Activated B cell treated with CpG ODN at 0.5 μM for 24 hours (primary cell): ENCODE measurements at regions of chr9 and their contacts with region 1.

Region 1: GRCh38 chr9:1869843-1870242 is 145.3 kb upstream of the SMARCA2 start:
- DNase-seq: no peak
- ATAC-seq: peak; percentile 94
- H3K4me3 Mint-ChIP-seq: no peak overlapping the region
- H3K27ac Mint-ChIP-seq: peak overlapping the region; percentile 15
- H3K4me1 Mint-ChIP-seq: peaks cover 9% of the 10 kb centered on the region
- H3K27me3 Mint-ChIP-seq: no peaks in the 10 kb centered on the region
- CTCF ChIP-seq: no peak

Region 2: GRCh38 chr9:677461-678097 is 1192.3 kb before region 1 on chr9:
- CTCF ChIA-PET with region 1: no interaction called
- POLR2A ChIA-PET with region 1: no interaction called
- intact Hi-C with region 1: no loop called
- DNase-seq: no peak
- ATAC-seq: no peak
- H3K4me3 Mint-ChIP-seq: peak overlapping the region; percentile 74
- H3K27ac Mint-ChIP-seq: no peak overlapping the region
- H3K4me1 Mint-ChIP-seq: peaks cover 10% of the 10 kb centered on the region
- H3K27me3 Mint-ChIP-seq: no peaks in the 10 kb centered on the region
- CTCF ChIP-seq: no peak

Region 3: DNA sequence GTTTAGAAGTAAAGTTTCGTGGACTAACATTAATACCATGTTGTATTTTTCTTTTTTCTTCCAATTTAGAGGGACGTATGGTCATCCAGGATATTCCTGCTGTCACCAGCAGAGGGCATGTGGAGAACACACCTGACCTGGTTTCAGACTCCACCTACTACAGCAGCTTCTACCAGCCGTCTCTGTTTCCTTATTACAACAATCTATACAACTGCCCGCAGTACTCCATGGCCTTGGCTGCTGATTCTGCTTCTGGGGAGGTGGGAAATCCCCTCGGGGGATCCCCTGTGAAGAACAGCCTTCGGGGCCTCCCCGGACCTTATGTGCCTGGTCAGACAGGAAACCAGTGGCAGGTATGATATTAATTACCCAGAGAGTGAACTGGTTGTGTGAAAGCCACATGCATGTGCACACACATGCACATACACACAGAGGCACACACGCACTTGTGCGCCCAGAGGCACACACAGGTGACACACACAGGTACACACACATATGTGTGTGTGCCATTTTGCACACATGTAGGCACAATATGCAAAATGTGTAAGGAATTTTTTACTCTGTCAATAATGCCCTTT is 975.9 kb before region 1 on chr9:
- CTCF ChIA-PET with region 1: no interaction called
- POLR2A ChIA-PET with region 1: no interaction called
- intact Hi-C with region 1: loop called (anchors 5 kb)
- DNase-seq: peak; percentile 38
- ATAC-seq: peak; percentile 98
- H3K4me3 Mint-ChIP-seq: no peak overlapping the region
- H3K27ac Mint-ChIP-seq: peak overlapping the region; percentile 47
- H3K4me1 Mint-ChIP-seq: peaks cover 13% of the 10 kb centered on the region
- H3K27me3 Mint-ChIP-seq: peaks cover 18% of the 10 kb centered on the region
- CTCF ChIP-seq: no peak

Region 4: GRCh38 chr9:1454616-1455347 is 415.1 kb before region 1 on chr9:
- CTCF ChIA-PET with region 1: no interaction called
- POLR2A ChIA-PET with region 1: no interaction called
- intact Hi-C with region 1: no loop called
- DNase-seq: no peak
- ATAC-seq: no peak
- H3K4me3 Mint-ChIP-seq: no peak overlapping the region
- H3K27ac Mint-ChIP-seq: no peak overlapping the region
- H3K4me1 Mint-ChIP-seq: no peaks in the 10 kb centered on the region
- H3K27me3 Mint-ChIP-seq: peaks cover 4% of the 10 kb centered on the region
- CTCF ChIP-seq: no peak

Region 5: DNA sequence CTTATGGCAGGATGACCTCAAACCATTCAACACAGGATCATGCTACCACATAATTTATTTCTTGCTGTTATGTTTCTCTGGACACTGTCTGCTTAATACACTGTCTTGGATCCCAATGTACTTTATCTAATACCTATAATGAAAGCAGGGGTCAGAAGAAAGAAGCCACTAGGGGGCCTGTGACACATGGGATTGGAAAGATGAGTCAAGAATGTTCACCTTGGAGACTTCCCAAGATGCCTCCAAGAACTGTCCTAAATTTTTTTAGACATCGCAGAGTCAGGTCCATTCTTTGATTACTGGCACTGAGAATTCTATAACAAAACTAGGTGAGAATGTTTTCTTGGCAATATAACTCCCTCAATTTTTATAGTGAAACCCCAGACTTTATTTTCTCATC is 160.5 kb before region 1 on chr9:
- CTCF ChIA-PET with region 1: interaction called, 5 read pairs
- POLR2A ChIA-PET with region 1: no interaction called
- intact Hi-C with region 1: loop called (anchors 1 kb)
- DNase-seq: no peak
- ATAC-seq: no peak
- H3K4me3 Mint-ChIP-seq: no peak overlapping the region
- H3K27ac Mint-ChIP-seq: no peak overlapping the region
- H3K4me1 Mint-ChIP-seq: no peaks in the 10 kb centered on the region
- H3K27me3 Mint-ChIP-seq: peaks cover 4% of the 10 kb centered on the region
- CTCF ChIP-seq: no peak

Region 6: DNA sequence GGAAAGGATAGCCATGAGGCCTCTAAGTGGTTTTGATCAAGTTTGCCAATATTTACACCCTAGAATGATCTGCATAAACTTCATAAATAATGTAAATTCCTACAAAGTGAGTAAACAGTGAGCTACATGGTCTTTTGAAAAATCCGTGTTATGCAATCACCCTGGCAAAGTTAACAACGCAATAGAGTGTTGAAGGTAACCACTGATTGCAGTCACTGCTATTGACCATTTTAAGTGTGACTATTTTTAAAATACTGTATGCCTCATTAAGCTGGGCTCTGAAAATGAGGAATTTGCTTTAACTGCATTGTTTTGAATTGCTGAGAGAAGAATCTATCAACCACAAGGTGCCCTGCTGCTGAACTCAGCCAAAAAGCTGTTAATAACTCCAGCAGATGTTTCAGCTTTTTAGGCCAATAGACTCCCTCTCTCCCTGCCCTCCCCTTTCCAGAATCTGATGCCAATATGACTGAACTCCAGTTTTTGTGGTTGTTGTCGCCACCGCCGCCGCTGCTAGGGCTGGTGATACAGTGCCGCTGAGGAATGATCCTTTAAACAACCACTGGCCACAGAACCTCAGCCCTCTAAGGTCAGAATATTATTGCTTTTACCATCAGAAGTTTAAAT is 110.0 kb after region 1 on chr9:
- CTCF ChIA-PET with region 1: no interaction called
- POLR2A ChIA-PET with region 1: no interaction called
- intact Hi-C with region 1: no loop called
- DNase-seq: no peak
- ATAC-seq: no peak
- H3K4me3 Mint-ChIP-seq: no peak overlapping the region
- H3K27ac Mint-ChIP-seq: no peak overlapping the region
- H3K4me1 Mint-ChIP-seq: no peaks in the 10 kb centered on the region
- H3K27me3 Mint-ChIP-seq: no peaks in the 10 kb centered on the region
- CTCF ChIP-seq: no peak

Region 7: GRCh38 chr9:1994180-1994579 is 124.3 kb after region 1 on chr9:
- CTCF ChIA-PET with region 1: no interaction called
- POLR2A ChIA-PET with region 1: no interaction called
- intact Hi-C with region 1: no loop called
- DNase-seq: no peak
- ATAC-seq: no peak
- H3K4me3 Mint-ChIP-seq: no peak overlapping the region
- H3K27ac Mint-ChIP-seq: no peak overlapping the region
- H3K4me1 Mint-ChIP-seq: no peaks in the 10 kb centered on the region
- H3K27me3 Mint-ChIP-seq: peaks cover 9% of the 10 kb centered on the region
- CTCF ChIP-seq: no peak

Region 8: GRCh38 chr9:2066312-2067273 is 196.8 kb after region 1 on chr9:
- CTCF ChIA-PET with region 1: no interaction called
- POLR2A ChIA-PET with region 1: no interaction called
- intact Hi-C with region 1: loop called (anchors 5 kb)
- DNase-seq: no peak
- ATAC-seq: no peak
- H3K4me3 Mint-ChIP-seq: no peak overlapping the region
- H3K27ac Mint-ChIP-seq: no peak overlapping the region
- H3K4me1 Mint-ChIP-seq: no peaks in the 10 kb centered on the region
- H3K27me3 Mint-ChIP-seq: no peaks in the 10 kb centered on the region
- CTCF ChIP-seq: no peak